Activated CD8-positive, alpha-beta T cell treated with anti-CD3 and anti-CD28 coated beads for 36 hours (primary cell): ENCODE measurements at regions of chr4 and their contacts with region 1.

Region 1: GRCh38 chr4:94390804-94391410 is 48.3 kb upstream of the HPGDS start:
- DNase-seq: peak; percentile 44
- ATAC-seq: no peak
- H3K4me3 Mint-ChIP-seq: no peak overlapping the region
- H3K27ac Mint-ChIP-seq: no peak overlapping the region
- H3K4me1 Mint-ChIP-seq: no peaks in the 10 kb centered on the region
- H3K27me3 Mint-ChIP-seq: peaks cover 2% of the 10 kb centered on the region
- CTCF ChIP-seq: peak; percentile 72

Region 2: DNA sequence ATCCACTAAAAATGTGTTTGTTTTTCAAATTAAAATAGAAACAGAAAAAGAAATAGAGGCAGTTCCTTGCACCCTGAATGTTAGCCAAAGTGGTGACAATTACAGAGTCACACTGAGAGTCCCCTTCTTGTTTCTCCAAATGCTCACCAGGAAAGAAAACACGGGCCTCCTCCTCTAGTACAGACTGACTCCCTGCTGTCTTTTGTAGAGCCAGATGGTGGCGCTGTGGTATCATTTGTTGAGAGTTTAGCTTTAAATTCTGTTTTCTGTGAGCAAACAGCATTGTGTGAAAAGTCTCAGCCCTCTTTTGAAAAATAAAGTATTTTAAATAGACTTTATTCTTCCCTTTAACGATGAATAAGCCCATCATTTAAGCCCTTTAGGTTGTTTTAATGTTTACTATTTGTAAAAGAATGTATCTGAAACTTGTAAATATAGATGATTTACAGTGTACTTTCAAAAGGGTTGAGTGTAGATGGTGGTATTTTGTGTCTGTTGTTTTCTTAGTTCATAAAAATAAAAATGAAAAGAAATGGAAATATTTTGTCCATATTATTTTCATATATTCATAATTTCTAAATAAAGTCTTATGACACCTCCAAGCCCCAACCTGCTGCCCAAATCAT is 599.2 kb before region 1 on chr4:
- CTCF ChIA-PET with region 1: no interaction called
- POLR2A ChIA-PET with region 1: no interaction called
- intact Hi-C with region 1: loop called (anchors 10 kb)
- DNase-seq: peak; percentile 53
- ATAC-seq: no peak
- H3K4me3 Mint-ChIP-seq: no peak overlapping the region
- H3K27ac Mint-ChIP-seq: no peak overlapping the region
- H3K4me1 Mint-ChIP-seq: no peaks in the 10 kb centered on the region
- H3K27me3 Mint-ChIP-seq: no peaks in the 10 kb centered on the region
- CTCF ChIP-seq: peak; percentile 75

Region 3: DNA sequence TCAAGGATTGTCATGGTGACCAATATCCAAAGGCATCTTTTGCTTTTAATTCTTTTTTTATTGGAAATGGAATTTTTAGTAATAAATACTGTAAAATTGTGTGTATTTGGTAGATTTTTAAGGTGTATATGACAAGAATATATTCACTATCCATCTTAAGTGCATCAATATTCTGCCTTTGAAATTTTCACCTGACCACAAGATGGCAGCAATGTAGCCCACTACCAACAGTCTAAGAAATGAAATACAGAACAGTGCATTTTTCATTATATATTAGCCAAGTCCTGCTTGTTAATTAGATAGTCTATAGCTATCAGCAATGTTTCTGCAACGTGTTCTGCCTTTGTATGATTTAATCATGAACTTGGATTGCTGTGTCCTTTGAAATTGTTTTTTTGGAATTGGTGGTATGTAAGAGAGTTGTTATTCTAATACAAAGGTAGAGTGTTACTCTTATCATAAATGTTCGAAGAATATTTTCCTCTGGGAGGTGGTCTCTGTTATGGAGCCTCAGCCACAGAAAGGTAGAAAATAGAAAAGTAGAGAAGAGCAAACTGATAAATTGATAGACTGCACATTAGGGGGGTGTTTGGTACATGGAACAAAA is 86.4 kb before region 1 on chr4:
- CTCF ChIA-PET with region 1: interaction called, 5 read pairs
- POLR2A ChIA-PET with region 1: no interaction called
- intact Hi-C with region 1: loop called (anchors 1 kb)
- DNase-seq: peak; percentile 27
- ATAC-seq: no peak
- H3K4me3 Mint-ChIP-seq: no peak overlapping the region
- H3K27ac Mint-ChIP-seq: no peak overlapping the region
- H3K4me1 Mint-ChIP-seq: no peaks in the 10 kb centered on the region
- H3K27me3 Mint-ChIP-seq: no peaks in the 10 kb centered on the region
- CTCF ChIP-seq: peak; percentile 72